Activated naive CD4-positive, alpha-beta T cell treated with anti-CD3 and anti-CD28 coated beads, Interleukin-2, amount 10 ng/mL, durations not matched to agents 7 days and 5 days (primary cell): ENCODE measurements at regions of chr21 and their contacts with region 1.

Region 1: GRCh38 chr21:45140346-45140940 is 66.1 kb downstream of the ADARB1 start:
- DNase-seq: peak; percentile 81
- H3K4me3 Mint-ChIP-seq: no peak overlapping the region
- H3K27ac Mint-ChIP-seq: no peak overlapping the region
- H3K4me1 Mint-ChIP-seq: peaks cover 5% of the 10 kb centered on the region
- H3K27me3 Mint-ChIP-seq: no peaks in the 10 kb centered on the region

Region 2: GRCh38 chr21:44962403-44962966 is 178.0 kb before region 1 on chr21:
- CTCF ChIA-PET with region 1: interaction called, 42 read pairs
- DNase-seq: no peak
- H3K4me3 Mint-ChIP-seq: no peak overlapping the region
- H3K27ac Mint-ChIP-seq: no peak overlapping the region
- H3K4me1 Mint-ChIP-seq: peaks cover 27% of the 10 kb centered on the region
- H3K27me3 Mint-ChIP-seq: no peaks in the 10 kb centered on the region

Region 3: GRCh38 chr21:45074818-45075595 is 65.4 kb before region 1 on chr21:
- CTCF ChIA-PET with region 1: interaction called, 21 read pairs
- DNase-seq: peak; percentile 41
- H3K4me3 Mint-ChIP-seq: peak overlapping the region; percentile 86
- H3K27ac Mint-ChIP-seq: peak overlapping the region; percentile 76
- H3K4me1 Mint-ChIP-seq: peaks cover 49% of the 10 kb centered on the region
- H3K27me3 Mint-ChIP-seq: no peaks in the 10 kb centered on the region

Region 4: GRCh38 chr21:45104560-45104959 is 35.9 kb before region 1 on chr21:
- CTCF ChIA-PET with region 1: interaction called, 17 read pairs
- DNase-seq: no peak
- H3K4me3 Mint-ChIP-seq: no peak overlapping the region
- H3K27ac Mint-ChIP-seq: no peak overlapping the region
- H3K4me1 Mint-ChIP-seq: peaks cover 70% of the 10 kb centered on the region
- H3K27me3 Mint-ChIP-seq: no peaks in the 10 kb centered on the region

Region 5: DNA sequence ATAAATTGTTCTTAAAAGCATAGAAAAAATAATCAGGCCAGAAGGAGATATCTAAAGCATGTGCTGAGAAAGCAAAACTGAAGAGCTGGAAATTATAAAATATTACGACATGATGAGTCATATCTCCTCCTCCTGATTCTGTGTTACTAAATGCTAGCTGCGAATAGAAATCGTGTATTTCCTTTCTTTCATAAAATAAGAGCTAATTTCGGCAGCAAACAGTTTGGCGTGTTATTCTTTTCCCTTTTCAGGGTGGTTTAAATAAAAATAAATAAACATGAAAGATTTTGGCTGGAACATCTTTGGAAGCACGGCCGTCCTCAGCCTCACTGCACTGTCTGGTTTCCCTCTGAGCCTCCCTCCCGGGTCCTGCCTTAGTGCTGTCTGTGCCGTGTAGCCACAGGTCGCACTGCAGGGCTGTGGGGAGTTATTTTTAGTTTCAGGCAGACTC is 10.1 kb before region 1 on chr21:
- CTCF ChIA-PET with region 1: interaction called, 96 read pairs
- DNase-seq: no peak
- H3K4me3 Mint-ChIP-seq: no peak overlapping the region
- H3K27ac Mint-ChIP-seq: no peak overlapping the region
- H3K4me1 Mint-ChIP-seq: peaks cover 13% of the 10 kb centered on the region
- H3K27me3 Mint-ChIP-seq: no peaks in the 10 kb centered on the region

Region 6: GRCh38 chr21:45287438-45288391 is 147.3 kb after region 1 on chr21 and contains the start of gene POFUT2:
- CTCF ChIA-PET with region 1: interaction called, 16 read pairs
- DNase-seq: peak; percentile 98
- H3K4me3 Mint-ChIP-seq: peak within 1 kb of the TSS; percentile 84
- H3K27ac Mint-ChIP-seq: peak within 1 kb of the TSS; percentile 72
- H3K4me1 Mint-ChIP-seq: peaks cover 19% of the 10 kb centered on the region
- H3K27me3 Mint-ChIP-seq: peaks cover 15% of the 10 kb centered on the region

Region 7: GRCh38 chr21:45439161-45439872 is 298.9 kb after region 1 on chr21:
- CTCF ChIA-PET with region 1: interaction called, 21 read pairs
- DNase-seq: peak; percentile 90
- H3K4me3 Mint-ChIP-seq: peak overlapping the region; percentile 43
- H3K27ac Mint-ChIP-seq: peak overlapping the region; percentile 37
- H3K4me1 Mint-ChIP-seq: peaks cover 12% of the 10 kb centered on the region
- H3K27me3 Mint-ChIP-seq: peaks cover 18% of the 10 kb centered on the region